ENCODE measurements at regions of chr3 and their contacts with region 1.

Region 1: GRCh38 chr3:49339945-49340800 is at the start of gene USP4:
- DNase-seq: peak; percentile 97
- H3K4me3 Mint-ChIP-seq: peak within 1 kb of the TSS; percentile 96
- H3K27ac Mint-ChIP-seq: peak within 1 kb of the TSS; percentile 99
- H3K4me1 Mint-ChIP-seq: peaks cover 43% of the 10 kb centered on the region
- H3K27me3 Mint-ChIP-seq: no peaks in the 10 kb centered on the region
- total RNA-seq, gene USP4: 79.4 to 79.7 TPM

Region 2: GRCh38 chr3:49171119-49171774 is 168.9 kb before region 1 on chr3 and contains the start of gene KLHDC8B:
- CTCF ChIA-PET with region 1: interaction called, 10 read pairs
- POLR2A ChIA-PET with region 1: no interaction called
- intact Hi-C with region 1: no loop called
- DNase-seq: peak; percentile 88
- H3K4me3 Mint-ChIP-seq: peak within 1 kb of the TSS; percentile 82
- H3K27ac Mint-ChIP-seq: no peak within 1 kb of the TSS
- H3K4me1 Mint-ChIP-seq: peaks cover 13% of the 10 kb centered on the region
- H3K27me3 Mint-ChIP-seq: no peaks in the 10 kb centered on the region
- total RNA-seq, gene KLHDC8B: 1.8 to 2.9 TPM

Region 3: DNA sequence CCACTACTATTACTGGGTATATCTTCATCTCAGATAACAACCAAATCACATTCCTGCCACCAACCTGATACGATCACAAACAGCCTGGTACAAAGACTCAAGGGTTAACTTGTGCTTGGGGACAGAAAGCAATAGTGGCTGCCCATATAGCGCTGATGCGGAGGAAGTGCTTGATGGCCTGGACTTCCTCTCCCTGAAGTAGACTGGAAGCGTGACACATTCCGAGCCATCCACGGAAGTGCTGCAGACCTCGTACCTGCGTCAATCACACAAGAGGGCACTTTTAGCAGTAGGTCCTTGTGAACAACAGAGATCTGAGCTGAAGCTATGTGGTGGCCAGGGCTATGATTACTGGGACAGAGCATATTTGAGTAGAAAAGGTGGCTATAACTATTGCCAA is 45.8 kb before region 1 on chr3:
- CTCF ChIA-PET with region 1: no interaction called
- POLR2A ChIA-PET with region 1: no interaction called
- intact Hi-C with region 1: no loop called
- DNase-seq: no peak
- H3K4me3 Mint-ChIP-seq: no peak overlapping the region
- H3K27ac Mint-ChIP-seq: no peak overlapping the region
- H3K4me1 Mint-ChIP-seq: no peaks in the 10 kb centered on the region
- H3K27me3 Mint-ChIP-seq: no peaks in the 10 kb centered on the region

Region 4: GRCh38 chr3:49358217-49358883 is 18.2 kb after region 1 on chr3 and contains the start of gene GPX1:
- CTCF ChIA-PET with region 1: interaction called, 39 read pairs
- POLR2A ChIA-PET with region 1: interaction called, 34 read pairs
- intact Hi-C with region 1: loop called (anchors 1 kb)
- DNase-seq: peak; percentile 92
- H3K4me3 Mint-ChIP-seq: peak within 1 kb of the TSS; percentile 95
- H3K27ac Mint-ChIP-seq: peak within 1 kb of the TSS; percentile 92
- H3K4me1 Mint-ChIP-seq: peaks cover 22% of the 10 kb centered on the region
- H3K27me3 Mint-ChIP-seq: no peaks in the 10 kb centered on the region
- total RNA-seq, gene GPX1: 176 to 177 TPM

Region 5: GRCh38 chr3:49411968-49412631 is 71.9 kb after region 1 on chr3 and contains the starts of genes RHOA and TCTA:
- CTCF ChIA-PET with region 1: interaction called, 16 read pairs
- POLR2A ChIA-PET with region 1: interaction called, 33 read pairs
- intact Hi-C with region 1: loop called (anchors 1 kb)
- DNase-seq: peak; percentile 99
- H3K4me3 Mint-ChIP-seq: peak within 1 kb of the TSS; percentile 90
- H3K27ac Mint-ChIP-seq: peak within 1 kb of the TSS; percentile 95
- H3K4me1 Mint-ChIP-seq: peaks cover 63% of the 10 kb centered on the region
- H3K27me3 Mint-ChIP-seq: no peaks in the 10 kb centered on the region
- total RNA-seq, gene RHOA: 497 to 514 TPM
- total RNA-seq, gene TCTA: 9.5 to 10.9 TPM

Region 6: DNA sequence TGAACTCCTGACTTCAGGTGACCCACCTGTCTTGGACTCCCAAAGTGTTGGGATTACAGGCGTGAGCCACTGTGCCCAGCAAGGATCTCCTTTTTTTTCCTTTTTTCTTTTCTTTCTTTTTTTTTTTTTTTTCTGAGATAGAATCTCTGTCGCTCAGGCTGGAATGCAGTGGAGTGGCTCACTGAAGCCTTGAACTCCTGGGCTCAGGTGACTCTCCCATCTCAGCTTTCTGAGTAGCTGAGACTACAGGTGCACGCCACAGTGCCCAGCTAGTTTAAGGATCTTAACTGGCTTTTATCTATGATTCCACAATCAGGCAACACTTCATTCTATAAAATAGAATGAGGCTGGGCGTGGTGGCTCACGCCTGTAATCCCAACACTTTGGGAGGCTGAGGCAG is 105.2 kb after region 1 on chr3:
- CTCF ChIA-PET with region 1: interaction called, 49 read pairs
- POLR2A ChIA-PET with region 1: interaction called, 6 read pairs
- intact Hi-C with region 1: loop called (anchors 1 kb)
- DNase-seq: no peak
- H3K4me3 Mint-ChIP-seq: no peak overlapping the region
- H3K27ac Mint-ChIP-seq: no peak overlapping the region
- H3K4me1 Mint-ChIP-seq: peaks cover 15% of the 10 kb centered on the region
- H3K27me3 Mint-ChIP-seq: no peaks in the 10 kb centered on the region

Region 7: GRCh38 chr3:49469936-49470713 is 130.0 kb after region 1 on chr3 and contains the start of gene DAG1:
- CTCF ChIA-PET with region 1: interaction called, 9 read pairs
- POLR2A ChIA-PET with region 1: interaction called, 15 read pairs
- intact Hi-C with region 1: loop called (anchors 1 kb)
- DNase-seq: peak; percentile 97
- H3K4me3 Mint-ChIP-seq: peak within 1 kb of the TSS; percentile 91
- H3K27ac Mint-ChIP-seq: peak within 1 kb of the TSS; percentile 87
- H3K4me1 Mint-ChIP-seq: peaks cover 21% of the 10 kb centered on the region
- H3K27me3 Mint-ChIP-seq: no peaks in the 10 kb centered on the region
- total RNA-seq, gene DAG1: 9.4 to 9.6 TPM

Measured in activated CD4-positive, alpha-beta memory T cell treated with anti-CD3 and anti-CD28 coated beads for 36 hours (primary cell).